Activated T-helper 1 cell treated with anti-CD3 and anti-CD28 coated beads, Interleukin-12 subunit alpha, Interleukin-12 subunit beta, Interleukin-2, Interleukin-4 antibody, amounts not matched to agents 30 ng/mL and 10 ng/mL and 1 ng/mL, durations not matched to agents 14 hours and 24 hours and 36 hours (primary cell): ENCODE measurements at regions of chr17 and their contacts with region 1.

Region 1: GRCh38 chr17:36948717-36949460 is at the start of gene AATF:
- DNase-seq: peak; percentile 98
- H3K4me3 Mint-ChIP-seq: peak within 1 kb of the TSS; percentile 97
- H3K27ac Mint-ChIP-seq: peak within 1 kb of the TSS; percentile 94
- H3K4me1 Mint-ChIP-seq: peaks cover 55% of the 10 kb centered on the region
- H3K27me3 Mint-ChIP-seq: peaks cover 40% of the 10 kb centered on the region
- total RNA-seq, gene AATF: 110 and 119 TPM in 2 replicates

Region 2: GRCh38 chr17:36534840-36535668 is 413.8 kb before region 1 on chr17 and contains the starts of genes MYO19 and PIGW:
- intact Hi-C with region 1: loop called (anchors 10 kb)
- DNase-seq: peak; percentile 86
- H3K4me3 Mint-ChIP-seq: peak within 1 kb of the TSS; percentile 98
- H3K27ac Mint-ChIP-seq: peak within 1 kb of the TSS; percentile 99
- H3K4me1 Mint-ChIP-seq: peaks cover 39% of the 10 kb centered on the region
- H3K27me3 Mint-ChIP-seq: no peaks in the 10 kb centered on the region
- total RNA-seq, gene MYO19: 159 and 165 TPM in 2 replicates
- total RNA-seq, gene PIGW: 29.4 and 30.8 TPM in 2 replicates

Region 3: DNA sequence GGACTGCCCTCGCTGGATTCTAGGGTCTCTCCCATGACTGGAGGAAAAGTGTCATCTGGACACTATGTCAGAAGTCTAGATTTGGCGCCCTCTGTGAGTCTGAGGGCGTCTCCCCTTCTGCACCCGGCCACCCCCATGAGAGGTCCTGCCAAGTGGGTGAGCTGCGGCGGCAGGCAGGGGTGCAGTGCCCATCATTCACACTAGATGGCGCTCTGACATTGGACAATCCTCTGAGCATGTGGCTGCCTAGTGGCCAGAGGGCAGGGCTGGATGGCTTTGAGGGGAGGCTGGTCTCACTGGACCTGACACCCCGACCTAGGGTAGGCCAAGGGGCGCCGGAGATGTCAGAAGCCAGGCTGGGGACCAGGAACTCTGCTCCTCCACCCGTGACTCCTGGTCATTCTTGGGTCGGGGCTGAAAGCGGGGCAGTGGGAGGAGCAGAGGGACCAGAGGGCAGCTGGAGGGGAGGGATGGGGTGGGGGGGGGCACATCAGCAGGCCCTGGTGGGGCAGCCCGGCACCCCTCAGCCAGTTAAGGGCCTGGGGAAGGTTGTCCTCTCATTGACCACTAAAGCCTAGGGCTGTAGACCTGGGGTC is 319.5 kb before region 1 on chr17:
- intact Hi-C with region 1: loop called (anchors 5 kb)
- DNase-seq: peak; percentile 70
- H3K4me3 Mint-ChIP-seq: no peak overlapping the region
- H3K27ac Mint-ChIP-seq: no peak overlapping the region
- H3K4me1 Mint-ChIP-seq: no peaks in the 10 kb centered on the region
- H3K27me3 Mint-ChIP-seq: peaks cover 16% of the 10 kb centered on the region

Region 4: GRCh38 chr17:36907407-36907806 is 41.5 kb before region 1 on chr17:
- intact Hi-C with region 1: no loop called
- DNase-seq: no peak
- H3K4me3 Mint-ChIP-seq: no peak overlapping the region
- H3K27ac Mint-ChIP-seq: no peak overlapping the region
- H3K4me1 Mint-ChIP-seq: no peaks in the 10 kb centered on the region
- H3K27me3 Mint-ChIP-seq: peaks cover 32% of the 10 kb centered on the region

Region 5: DNA sequence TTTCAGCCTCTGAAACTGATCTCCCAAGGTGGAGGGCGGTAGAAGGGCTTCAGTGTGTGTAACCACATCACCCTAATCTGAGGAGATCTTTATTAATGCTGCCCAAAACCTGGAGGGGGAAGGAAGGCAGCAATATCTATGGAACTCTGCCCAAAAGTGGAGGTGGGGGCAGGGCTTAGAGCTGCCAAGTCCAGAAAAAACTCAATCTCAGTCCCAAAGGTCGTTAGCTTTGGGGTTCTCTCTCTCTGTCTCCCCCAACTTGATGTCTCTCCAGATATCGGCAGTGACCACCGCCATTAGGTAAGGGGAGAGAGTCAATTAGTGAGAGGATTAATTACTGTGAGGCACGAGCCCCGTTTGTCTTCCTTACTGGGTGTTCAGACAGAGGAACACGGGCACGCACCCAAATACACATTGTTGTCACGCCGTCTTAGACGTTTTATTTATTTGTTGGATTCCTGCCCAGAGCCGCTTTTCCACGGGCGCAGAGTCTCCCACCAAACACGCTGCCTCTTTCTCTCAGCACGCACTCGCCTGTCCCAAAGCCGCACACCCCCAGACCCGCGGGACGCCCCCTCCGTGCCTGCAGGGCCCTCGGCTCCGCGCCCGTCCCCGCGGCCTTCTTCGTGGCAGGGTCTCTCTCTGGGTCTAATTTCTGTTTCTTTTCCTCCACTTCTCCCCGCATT is 17.0 kb before region 1 on chr17:
- intact Hi-C with region 1: loop called (anchors 2 kb)
- DNase-seq: no peak
- H3K4me3 Mint-ChIP-seq: peak overlapping the region; percentile 9
- H3K27ac Mint-ChIP-seq: peak overlapping the region; percentile 82
- H3K4me1 Mint-ChIP-seq: peaks cover 39% of the 10 kb centered on the region
- H3K27me3 Mint-ChIP-seq: peaks cover 82% of the 10 kb centered on the region

Region 6: DNA sequence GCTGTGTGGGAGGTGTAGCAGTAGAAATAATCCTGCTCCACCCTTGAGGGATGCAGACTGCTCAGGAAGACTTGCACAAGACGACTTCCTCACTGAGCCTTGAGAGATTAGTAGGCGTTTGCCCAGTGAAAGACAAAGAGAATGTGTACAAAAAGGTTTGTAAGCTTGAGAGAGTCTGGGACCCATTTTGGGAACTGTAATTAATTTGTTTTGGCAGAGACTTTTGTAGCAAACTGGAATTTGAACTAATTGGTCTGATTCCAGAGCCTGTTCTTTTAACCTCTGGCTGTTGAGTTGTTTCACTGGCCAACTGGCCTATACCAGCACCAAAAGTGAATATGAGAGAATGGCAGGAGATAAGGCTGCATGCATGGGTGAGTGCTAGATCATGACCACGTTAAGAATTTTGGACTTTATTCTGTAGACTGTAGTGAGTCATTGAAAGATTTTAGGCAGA is 75.3 kb after region 1 on chr17:
- intact Hi-C with region 1: no loop called
- DNase-seq: no peak
- H3K4me3 Mint-ChIP-seq: no peak overlapping the region
- H3K27ac Mint-ChIP-seq: no peak overlapping the region
- H3K4me1 Mint-ChIP-seq: peaks cover 29% of the 10 kb centered on the region
- H3K27me3 Mint-ChIP-seq: no peaks in the 10 kb centered on the region

Region 7: DNA sequence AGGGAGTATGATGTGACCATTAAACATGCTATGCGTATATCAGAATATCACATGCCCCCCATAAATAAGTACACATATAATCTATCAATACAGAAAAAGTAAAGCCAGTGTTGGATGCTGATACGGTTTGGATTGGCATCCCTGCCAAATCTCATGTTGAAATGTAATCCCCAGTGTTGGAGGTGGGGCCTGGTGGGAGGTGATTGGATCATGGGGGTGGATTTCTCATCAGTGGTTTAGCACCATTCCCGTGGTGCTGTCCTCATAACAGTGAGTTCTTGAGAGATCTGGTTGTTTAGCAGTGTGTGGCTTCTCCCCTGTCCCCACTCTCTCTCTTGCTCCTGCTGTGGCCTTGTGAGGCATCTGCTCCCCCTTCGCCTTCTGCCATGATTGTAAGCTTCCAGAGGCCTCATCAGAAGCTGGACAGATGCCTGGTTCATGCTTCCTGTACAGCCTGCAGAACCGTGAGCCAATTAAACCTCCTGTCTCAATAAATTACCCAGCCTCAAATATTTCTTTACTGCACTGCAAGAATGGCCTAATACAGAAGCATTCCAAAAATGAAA is 88.8 kb after region 1 on chr17:
- intact Hi-C with region 1: no loop called
- DNase-seq: no peak
- H3K4me3 Mint-ChIP-seq: no peak overlapping the region
- H3K27ac Mint-ChIP-seq: no peak overlapping the region
- H3K4me1 Mint-ChIP-seq: no peaks in the 10 kb centered on the region
- H3K27me3 Mint-ChIP-seq: no peaks in the 10 kb centered on the region

Region 8: GRCh38 chr17:37212179-37212578 is 263.3 kb after region 1 on chr17:
- intact Hi-C with region 1: no loop called
- DNase-seq: no peak
- H3K4me3 Mint-ChIP-seq: no peak overlapping the region
- H3K27ac Mint-ChIP-seq: no peak overlapping the region
- H3K4me1 Mint-ChIP-seq: no peaks in the 10 kb centered on the region
- H3K27me3 Mint-ChIP-seq: no peaks in the 10 kb centered on the region

Region 9: DNA sequence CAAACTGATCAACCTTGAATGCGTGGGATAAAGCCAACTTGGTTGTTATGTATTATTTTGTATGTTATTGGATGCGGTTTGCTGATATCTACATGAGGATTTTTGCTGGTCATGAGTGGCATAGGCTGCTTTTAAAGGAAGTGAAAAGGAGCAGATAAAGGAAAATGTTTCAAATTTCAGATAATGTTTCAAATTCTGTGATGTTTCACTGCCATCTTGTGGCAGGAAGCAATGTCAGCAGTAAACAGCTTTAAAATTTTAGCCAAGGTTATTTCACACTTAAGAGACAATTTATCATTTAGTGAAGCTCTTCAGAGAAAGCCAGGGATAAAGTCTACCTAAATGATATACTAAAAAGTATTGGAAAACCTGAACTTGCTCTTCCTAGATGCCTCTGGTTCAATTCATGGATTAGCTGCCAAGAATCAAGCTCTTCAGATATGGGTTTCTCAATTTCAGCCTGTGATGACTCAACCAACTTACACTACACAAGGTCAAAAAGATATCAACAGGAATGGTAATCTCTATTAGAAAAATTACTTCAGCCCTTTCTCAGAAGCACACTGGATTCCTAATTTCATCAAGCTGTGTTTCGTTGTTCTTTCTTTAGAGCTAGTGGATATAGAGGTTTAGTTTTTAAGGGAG is 290.9 kb after region 1 on chr17:
- intact Hi-C with region 1: loop called (anchors 1 kb)
- DNase-seq: no peak
- H3K4me3 Mint-ChIP-seq: no peak overlapping the region
- H3K27ac Mint-ChIP-seq: no peak overlapping the region
- H3K4me1 Mint-ChIP-seq: no peaks in the 10 kb centered on the region
- H3K27me3 Mint-ChIP-seq: no peaks in the 10 kb centered on the region

Region 10: GRCh38 chr17:38557836-38558727 is 1609.2 kb after region 1 on chr17:
- intact Hi-C with region 1: loop called (anchors 10 kb)
- DNase-seq: peak; percentile 87
- H3K4me3 Mint-ChIP-seq: peak overlapping the region; percentile 95
- H3K27ac Mint-ChIP-seq: peak overlapping the region; percentile 69
- H3K4me1 Mint-ChIP-seq: peaks cover 27% of the 10 kb centered on the region
- H3K27me3 Mint-ChIP-seq: peaks cover 48% of the 10 kb centered on the region